Tibial artery (tissue), 4 donors: ENCODE measurements at regions of chr10 and their contacts with region 1.

Region 1: DNA sequence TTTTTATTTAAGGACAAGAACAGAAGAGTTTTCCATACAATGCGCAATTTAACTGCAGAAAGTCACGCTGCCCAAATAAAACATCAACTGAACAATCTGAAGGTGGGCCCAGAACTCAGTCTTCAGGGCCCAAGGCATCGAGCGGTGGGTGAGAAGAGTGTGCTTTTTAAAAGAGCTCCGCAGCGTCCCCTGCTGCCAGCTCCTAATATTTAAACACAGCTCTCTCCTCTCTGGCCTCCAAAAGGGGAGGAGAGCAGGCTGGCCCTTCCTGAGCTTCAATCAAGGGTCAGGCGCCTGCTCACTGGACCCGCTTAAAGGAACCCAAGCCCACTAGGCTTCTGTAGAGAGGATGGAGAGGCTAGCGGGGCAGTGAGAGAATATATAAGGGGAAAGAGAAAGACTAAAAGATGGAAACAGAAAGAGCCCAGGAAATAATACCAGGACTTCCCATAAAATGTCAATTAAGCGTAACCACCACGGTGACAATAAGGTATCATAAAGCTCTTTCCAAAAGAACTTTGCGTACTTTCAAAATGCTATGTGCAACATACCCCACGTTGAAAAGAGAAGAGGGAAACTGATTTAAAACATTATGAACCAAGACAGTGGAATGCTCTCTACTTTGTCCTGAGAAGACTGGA is 2.8 kb downstream of the FAM53B start:
- DNase-seq: peak; percentile 86 to 88
- H3K4me3 ChIP-seq: peak overlapping the region in 1 of 2 donors; percentile 65
- H3K27ac ChIP-seq: peak overlapping the region; percentile 39 to 59
- H3K4me1 ChIP-seq: peaks cover 0 to 59% (median 45%) of the 10 kb centered on the region in 4 donors
- H3K27me3 ChIP-seq: no peaks in the 10 kb centered on the region
- CTCF ChIP-seq: peak; percentile 77 to 91

Region 2: DNA sequence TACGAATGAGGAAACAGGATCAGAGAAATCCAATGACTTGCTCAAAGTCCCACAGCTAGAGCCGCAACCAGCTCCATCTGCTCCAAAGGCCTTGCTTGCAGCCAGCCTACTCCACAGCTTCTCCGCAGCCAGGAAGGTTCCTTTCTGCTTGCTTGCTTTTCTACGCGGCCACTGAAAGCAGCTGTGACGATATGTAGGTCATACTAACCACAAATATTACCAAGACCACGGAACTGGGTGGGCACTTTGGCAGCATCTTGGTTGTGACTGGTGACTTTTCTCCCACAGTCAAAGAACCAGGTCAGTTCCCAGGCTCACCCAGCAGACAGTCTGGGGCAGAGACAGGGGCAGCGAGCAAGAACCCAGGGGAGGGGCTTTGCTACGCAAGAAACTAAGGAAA is 83.6 kb before region 1 on chr10:
- intact Hi-C with region 1: loop called (anchors 10 kb)
- DNase-seq: no peak
- H3K4me3 ChIP-seq: no peak overlapping the region
- H3K27ac ChIP-seq: peak overlapping the region in 1 of 2 donors; percentile 39
- H3K4me1 ChIP-seq: peaks cover 0 to 26% (median 3%) of the 10 kb centered on the region in 4 donors
- H3K27me3 ChIP-seq: no peaks in the 10 kb centered on the region
- CTCF ChIP-seq: no peak

Region 3: DNA sequence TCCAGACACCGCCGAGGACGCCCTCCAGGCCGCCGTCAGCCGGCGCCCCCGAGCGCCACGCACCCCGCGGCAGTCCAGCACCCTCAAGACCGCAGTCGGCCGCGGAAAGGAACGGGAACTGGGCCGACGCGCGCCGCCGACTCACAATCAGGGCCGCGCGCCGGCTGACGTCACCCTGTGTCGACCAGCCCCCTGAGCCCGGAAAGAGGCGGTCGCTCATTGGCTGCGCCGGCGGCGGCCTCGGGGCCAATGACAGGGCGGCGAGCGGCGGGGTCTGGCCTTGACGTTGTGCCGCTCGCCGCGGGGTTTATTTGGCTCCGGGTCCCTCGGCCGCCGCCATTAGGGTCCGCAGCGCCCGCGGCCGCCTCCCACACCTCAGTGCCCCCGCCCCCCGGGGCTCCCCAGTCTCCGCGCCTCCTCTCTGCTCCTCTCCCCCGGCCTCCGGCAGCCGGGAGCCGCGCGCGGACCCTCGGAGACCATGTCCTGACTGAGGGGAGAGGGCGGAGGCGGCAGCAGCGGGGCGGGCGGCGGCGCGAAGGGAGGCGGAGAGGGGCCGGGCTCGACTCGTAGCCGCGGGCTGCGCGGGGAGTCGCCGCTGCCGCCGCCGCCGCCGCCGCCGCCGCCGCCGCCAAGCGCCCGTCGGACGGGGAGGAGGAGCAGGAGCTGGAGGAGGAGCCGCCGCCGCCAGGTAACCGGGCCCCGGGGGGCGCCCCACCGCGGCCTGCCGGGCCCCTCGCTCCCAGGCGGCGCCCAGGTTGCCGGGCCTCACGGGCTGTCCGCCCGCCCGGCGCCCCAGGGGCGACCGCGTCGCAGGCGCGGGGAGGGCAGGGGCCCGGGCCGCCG is 175.4 kb after region 1 on chr10:
- intact Hi-C with region 1: no loop called
- DNase-seq: peak; percentile 97 to 98
- H3K4me3 ChIP-seq: peak overlapping the region; percentile 82 to 95
- H3K27ac ChIP-seq: peak overlapping the region; percentile 96 to 97
- H3K4me1 ChIP-seq: peaks cover 0 to 51% (median 21%) of the 10 kb centered on the region in 4 donors
- H3K27me3 ChIP-seq: no peaks in the 10 kb centered on the region
- CTCF ChIP-seq: no peak

Region 4: DNA sequence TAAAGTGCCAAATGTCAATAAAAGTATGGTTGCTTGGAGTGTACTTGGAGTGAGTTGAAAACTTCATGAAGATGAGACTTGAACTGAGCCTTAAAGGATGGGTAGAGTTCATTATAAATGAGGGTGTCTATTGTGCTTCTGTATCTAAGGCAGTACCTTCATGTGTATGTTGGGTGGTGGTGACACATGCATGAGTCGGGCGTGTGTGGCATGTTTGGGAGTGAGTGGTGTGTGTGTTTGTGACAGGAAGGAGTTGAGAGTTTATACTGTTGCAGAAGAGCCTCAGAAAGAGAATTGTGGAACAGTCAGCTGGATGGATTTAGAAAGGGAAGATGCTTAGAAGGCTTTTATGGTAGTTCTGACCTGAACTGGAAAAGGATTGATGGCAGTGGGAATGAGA is 194.5 kb after region 1 on chr10:
- intact Hi-C with region 1: no loop called
- DNase-seq: no peak
- H3K4me3 ChIP-seq: no peak overlapping the region
- H3K27ac ChIP-seq: no peak overlapping the region
- H3K4me1 ChIP-seq: peaks cover 0 to 24% (median 12%) of the 10 kb centered on the region in 4 donors
- H3K27me3 ChIP-seq: no peaks in the 10 kb centered on the region
- CTCF ChIP-seq: no peak

Region 5: GRCh38 chr10:125171402-125172306 is 430.3 kb after region 1 on chr10:
- intact Hi-C with region 1: no loop called
- DNase-seq: no peak
- H3K4me3 ChIP-seq: no peak overlapping the region
- H3K27ac ChIP-seq: no peak overlapping the region
- H3K4me1 ChIP-seq: no peaks in the 10 kb centered on the region
- H3K27me3 ChIP-seq: peaks cover 0 to 25% of the 10 kb centered on the region in 2 donors
- CTCF ChIP-seq: no peak